CD4-positive, alpha-beta memory T cell (primary cell): ENCODE measurements at regions of chr17 and their contacts with region 1.

Region 1: GRCh38 chr17:28951991-28952975 is 965 bp upstream of the PHF12 start:
- DNase-seq: peak; percentile 94 to 99 (median 99)
- H3K4me3 ChIP-seq: peak overlapping the region; percentile 86 to 92
- H3K4me3 Mint-ChIP-seq: no peak overlapping the region
- H3K27ac ChIP-seq: peak overlapping the region; percentile 86
- H3K27ac Mint-ChIP-seq: no peak overlapping the region
- H3K4me1 ChIP-seq: peaks cover 29% of the 10 kb centered on the region
- H3K4me1 Mint-ChIP-seq: peaks cover 12 to 20% (median 18%) of the 10 kb centered on the region in 4 donors
- H3K27me3 ChIP-seq: no peaks in the 10 kb centered on the region
- H3K27me3 Mint-ChIP-seq: no peaks in the 10 kb centered on the region

Region 2: DNA sequence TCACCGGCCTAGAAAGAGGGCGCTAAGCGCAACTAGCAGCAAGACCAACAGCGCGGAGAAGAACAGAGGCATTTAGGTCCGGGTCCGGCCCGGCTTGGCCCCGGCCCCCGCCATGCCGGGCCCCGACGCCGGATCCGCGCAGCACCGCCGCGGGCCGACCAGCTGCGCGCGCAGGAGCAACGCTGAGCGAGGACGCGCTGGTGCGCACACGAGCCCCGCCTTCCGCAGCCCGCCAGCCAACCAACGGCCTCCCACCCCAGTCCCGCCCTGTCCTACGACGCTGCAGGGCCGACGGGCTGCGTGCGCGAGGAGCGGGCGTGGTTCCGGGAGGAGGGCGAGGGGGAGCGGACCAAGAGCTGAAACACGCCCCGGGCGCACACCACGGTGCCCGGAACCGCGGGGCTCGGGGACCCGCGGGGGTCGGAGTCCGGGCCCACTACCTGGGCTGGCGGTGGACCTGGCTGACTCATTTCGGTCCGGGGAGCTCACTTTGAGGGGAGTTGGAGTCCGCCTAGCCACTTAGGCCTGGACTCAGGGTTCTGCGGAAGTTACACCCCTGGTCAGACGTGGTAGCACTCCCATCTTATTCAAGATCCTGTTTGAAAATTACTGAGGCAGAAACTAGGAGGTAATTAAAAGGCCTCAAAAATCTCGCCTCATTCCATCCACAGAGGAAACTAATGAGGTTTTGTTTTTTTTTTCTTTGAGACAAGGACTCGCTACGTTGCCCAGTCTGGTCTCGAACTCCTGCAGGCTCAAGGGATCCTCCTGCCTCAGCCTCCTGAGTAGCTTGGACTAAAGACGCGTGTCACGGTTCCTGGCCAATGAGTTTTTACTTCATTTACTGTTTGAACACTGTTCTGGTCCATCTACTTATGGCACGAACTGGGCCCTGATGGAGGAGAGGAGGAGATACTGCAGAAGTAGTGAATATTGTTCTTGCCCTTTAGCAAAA is 307.0 kb before region 1 on chr17 and contains the start of gene BLTP2:
- CTCF ChIA-PET with region 1: interaction called, 3 read pairs
- POLR2A ChIA-PET with region 1: interaction called, 13 read pairs
- intact Hi-C with region 1: loop called (anchors 5 kb)
- DNase-seq: peak; percentile 93 to 95 (median 94)
- H3K4me3 ChIP-seq: peak within 1 kb of the TSS; percentile 45 to 98
- H3K4me3 Mint-ChIP-seq: peak within 1 kb of the TSS; percentile 86 to 96 (median 92)
- H3K27ac ChIP-seq: peak within 1 kb of the TSS; percentile 91
- H3K27ac Mint-ChIP-seq: peak within 1 kb of the TSS; percentile 93 to 99 (median 98)
- H3K4me1 ChIP-seq: peaks cover 47% of the 10 kb centered on the region
- H3K4me1 Mint-ChIP-seq: peaks cover 31 to 45% (median 37%) of the 10 kb centered on the region in 4 donors
- H3K27me3 ChIP-seq: no peaks in the 10 kb centered on the region
- H3K27me3 Mint-ChIP-seq: no peaks in the 10 kb centered on the region
- total RNA-seq, gene BLTP2: 132 to 149 TPM

Region 3: DNA sequence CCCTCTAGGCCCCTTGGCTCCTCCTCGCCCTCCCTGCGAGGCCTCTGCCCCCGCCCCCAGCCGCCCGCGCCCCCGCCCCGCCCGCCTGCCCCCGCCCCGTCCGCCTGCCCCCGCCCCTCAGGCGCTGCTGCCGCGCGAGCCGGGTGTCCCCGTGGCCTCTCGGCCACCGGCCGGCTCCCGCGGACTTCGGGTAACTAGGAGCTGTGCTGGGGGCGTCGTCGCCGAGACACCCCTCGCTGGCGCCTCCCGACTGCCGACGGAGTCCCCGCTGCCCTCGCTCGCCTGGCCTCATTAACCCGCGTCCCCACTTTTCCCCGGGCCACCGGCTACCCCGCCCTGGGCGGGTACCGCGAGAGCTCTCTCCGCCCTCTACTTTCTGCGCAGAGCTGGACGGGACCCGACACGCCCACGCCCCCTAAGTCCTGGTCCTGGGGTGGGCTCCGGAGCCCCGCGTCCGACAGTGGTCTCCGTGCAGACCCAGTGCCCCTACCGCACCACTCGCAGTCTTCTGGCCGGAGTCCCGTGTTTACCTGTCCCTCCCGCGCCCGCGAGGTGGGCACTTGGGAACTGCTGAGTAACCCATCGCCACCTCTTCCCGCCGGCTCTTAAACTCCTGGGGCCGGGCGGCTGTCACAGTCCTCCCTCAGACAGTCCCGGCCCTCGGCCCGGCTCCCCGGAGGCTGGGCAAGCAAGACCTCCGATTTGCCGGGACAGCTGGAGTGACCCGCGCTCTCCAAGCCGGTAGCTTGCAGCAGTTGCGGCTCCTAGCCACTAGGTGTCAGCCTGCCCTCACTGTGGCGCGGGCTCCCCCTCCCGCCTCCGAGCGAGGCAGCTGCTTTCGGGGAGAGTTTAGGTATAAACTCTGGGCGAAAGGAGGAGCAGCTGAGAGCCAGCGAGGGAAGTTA is 225.8 kb before region 1 on chr17 and contains the start of gene TLCD1:
- CTCF ChIA-PET with region 1: interaction called, 95 read pairs
- POLR2A ChIA-PET with region 1: interaction called, 135 read pairs
- intact Hi-C with region 1: loop called (anchors 1 kb)
- DNase-seq: peak; percentile 86 to 91 (median 88)
- H3K4me3 ChIP-seq: peak within 1 kb of the TSS; percentile 57 to 85
- H3K4me3 Mint-ChIP-seq: peak within 1 kb of the TSS; percentile 91 to 98 (median 96)
- H3K27ac ChIP-seq: peak within 1 kb of the TSS; percentile 98
- H3K27ac Mint-ChIP-seq: peak within 1 kb of the TSS; percentile 99 to 100 (median 100)
- H3K4me1 ChIP-seq: peaks cover 46% of the 10 kb centered on the region
- H3K4me1 Mint-ChIP-seq: peaks cover 36 to 70% (median 48%) of the 10 kb centered on the region in 4 donors
- H3K27me3 ChIP-seq: no peaks in the 10 kb centered on the region
- H3K27me3 Mint-ChIP-seq: no peaks in the 10 kb centered on the region
- total RNA-seq, gene TLCD1: 1.0 to 2.2 TPM

Region 4: DNA sequence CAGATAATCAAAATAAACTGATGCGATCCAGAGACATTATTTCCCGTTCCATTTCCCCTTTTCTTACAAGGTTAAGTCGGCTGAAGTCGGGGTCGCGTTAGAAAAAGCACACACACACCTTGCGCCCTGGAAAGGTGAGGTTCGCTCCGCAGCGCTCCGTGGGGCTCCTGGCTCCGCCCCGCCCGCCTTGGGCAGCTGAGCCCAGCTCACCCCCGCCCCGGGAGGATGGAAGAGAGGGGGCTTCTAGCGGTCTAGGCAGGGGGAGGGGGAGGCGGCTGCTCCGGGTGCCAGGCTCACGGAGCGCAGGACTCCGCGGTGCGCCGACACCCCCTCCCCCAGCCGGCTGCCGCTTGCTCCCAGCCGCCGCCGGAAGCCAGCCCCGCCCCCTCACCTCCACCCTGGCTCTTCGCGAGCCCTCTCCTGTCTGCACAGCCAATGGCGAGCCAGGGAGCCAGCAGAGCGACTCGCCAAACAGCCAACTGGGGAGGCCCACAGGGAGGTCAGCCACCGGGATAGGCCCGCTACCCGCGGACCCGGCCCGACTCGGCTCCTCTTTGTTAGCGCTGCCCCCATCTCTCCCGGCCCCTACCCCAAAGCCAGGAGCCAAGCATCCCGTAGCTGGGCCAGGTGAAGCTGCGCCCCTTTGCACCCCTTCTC is 140.1 kb before region 1 on chr17:
- CTCF ChIA-PET with region 1: no interaction called
- POLR2A ChIA-PET with region 1: interaction called, 5 read pairs
- intact Hi-C with region 1: loop called (anchors 1 kb)
- DNase-seq: peak; percentile 94 to 97 (median 95)
- H3K4me3 ChIP-seq: peak overlapping the region; percentile 75 to 84
- H3K4me3 Mint-ChIP-seq: peak overlapping the region; percentile 90 to 98 (median 93)
- H3K27ac ChIP-seq: peak overlapping the region; percentile 90
- H3K27ac Mint-ChIP-seq: peak overlapping the region; percentile 94 to 100 (median 98)
- H3K4me1 ChIP-seq: peaks cover 44% of the 10 kb centered on the region
- H3K4me1 Mint-ChIP-seq: peaks cover 19 to 47% (median 37%) of the 10 kb centered on the region in 4 donors
- H3K27me3 ChIP-seq: no peaks in the 10 kb centered on the region
- H3K27me3 Mint-ChIP-seq: no peaks in the 10 kb centered on the region

Region 5: GRCh38 chr17:28896884-28897768 is 55.2 kb before region 1 on chr17 and contains the start of gene FLOT2:
- CTCF ChIA-PET with region 1: interaction called, 31 read pairs
- POLR2A ChIA-PET with region 1: interaction called, 193 read pairs
- intact Hi-C with region 1: no loop called
- DNase-seq: peak; percentile 65 to 81 (median 74)
- H3K4me3 ChIP-seq: peak within 1 kb of the TSS; percentile 86 to 90
- H3K4me3 Mint-ChIP-seq: peak within 1 kb of the TSS; percentile 91 to 98 (median 96)
- H3K27ac ChIP-seq: peak within 1 kb of the TSS; percentile 88
- H3K27ac Mint-ChIP-seq: peak within 1 kb of the TSS; percentile 95 to 100 (median 96)
- H3K4me1 ChIP-seq: peaks cover 73% of the 10 kb centered on the region
- H3K4me1 Mint-ChIP-seq: peaks cover 47 to 83% (median 65%) of the 10 kb centered on the region in 4 donors
- H3K27me3 ChIP-seq: no peaks in the 10 kb centered on the region
- H3K27me3 Mint-ChIP-seq: no peaks in the 10 kb centered on the region
- total RNA-seq, gene FLOT2: 216 to 224 TPM

Region 6: DNA sequence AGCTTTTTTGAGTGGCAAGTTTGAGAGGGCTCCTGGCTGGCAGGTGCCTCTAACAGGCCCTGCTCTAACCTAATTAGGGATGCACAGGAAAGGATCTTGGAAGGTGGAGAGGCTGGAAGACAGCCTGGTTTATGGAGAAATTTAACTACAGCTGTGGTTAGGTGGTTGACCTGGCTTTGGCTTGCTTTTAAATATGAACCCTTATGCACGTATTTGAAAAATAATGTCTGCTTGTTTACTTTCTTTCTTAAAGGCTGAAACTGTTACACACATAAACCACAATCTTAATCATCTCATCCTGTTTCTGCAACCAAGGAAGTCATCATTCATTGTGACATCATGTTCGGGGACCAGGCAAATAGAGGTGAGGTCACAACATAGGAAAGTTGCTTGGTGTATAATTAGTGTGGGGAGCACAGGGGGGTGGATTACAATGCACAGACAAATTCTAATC is 26.3 kb before region 1 on chr17:
- CTCF ChIA-PET with region 1: interaction called, 35 read pairs
- POLR2A ChIA-PET with region 1: interaction called, 257 read pairs
- intact Hi-C with region 1: loop called (anchors 1 kb)
- DNase-seq: peak; percentile 87 to 92 (median 89)
- H3K4me3 ChIP-seq: peak overlapping the region in 1 of 2 donors; percentile 15
- H3K4me3 Mint-ChIP-seq: peak overlapping the region; percentile 49 to 80 (median 60)
- H3K27ac ChIP-seq: peak overlapping the region; percentile 77
- H3K27ac Mint-ChIP-seq: peak overlapping the region; percentile 90 to 98 (median 96)
- H3K4me1 ChIP-seq: peaks cover 56% of the 10 kb centered on the region
- H3K4me1 Mint-ChIP-seq: peaks cover 49 to 79% (median 59%) of the 10 kb centered on the region in 4 donors
- H3K27me3 ChIP-seq: no peaks in the 10 kb centered on the region
- H3K27me3 Mint-ChIP-seq: no peaks in the 10 kb centered on the region

Region 7: DNA sequence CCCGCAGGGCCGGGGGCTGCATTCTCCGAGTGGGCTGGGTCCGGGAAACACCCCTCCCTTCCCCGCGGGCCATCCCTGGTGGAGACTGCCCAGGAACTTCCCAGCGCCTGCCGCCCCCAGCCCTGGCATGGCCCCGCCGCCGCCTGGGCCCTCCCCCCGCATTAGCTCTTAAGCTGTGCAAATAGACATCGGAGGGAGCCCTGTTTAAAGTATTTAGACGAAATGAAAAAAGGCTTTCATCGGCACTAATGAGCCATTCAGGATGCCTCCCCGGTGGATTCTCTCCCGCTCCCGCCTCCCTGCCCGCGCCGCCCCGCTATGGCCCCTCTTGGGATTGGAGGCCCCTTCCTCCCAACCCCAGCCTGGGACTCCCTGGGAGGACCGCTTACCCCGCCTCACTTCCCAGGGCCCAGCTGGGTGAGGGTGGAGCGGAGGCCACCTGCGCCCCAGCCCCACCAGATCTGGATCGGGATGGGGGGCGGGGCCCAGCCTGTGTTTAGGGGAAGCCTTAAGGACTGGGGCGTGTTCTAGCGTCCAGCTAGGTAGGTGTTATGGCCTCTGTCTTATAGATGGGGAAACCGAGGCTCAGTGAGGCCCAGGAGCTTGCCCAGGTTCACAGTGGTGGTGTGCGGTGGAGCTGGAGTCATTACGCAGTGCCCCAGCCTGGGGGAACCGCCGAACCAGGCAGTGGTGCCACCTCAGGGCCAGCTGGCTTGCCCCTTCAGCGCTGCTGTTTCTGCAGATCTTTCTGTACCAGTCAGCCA is 33.8 kb after region 1 on chr17:
- CTCF ChIA-PET with region 1: no interaction called
- POLR2A ChIA-PET with region 1: no interaction called
- intact Hi-C with region 1: no loop called
- DNase-seq: no peak
- H3K4me3 ChIP-seq: no peak overlapping the region
- H3K4me3 Mint-ChIP-seq: no peak overlapping the region
- H3K27ac ChIP-seq: no peak overlapping the region
- H3K27ac Mint-ChIP-seq: no peak overlapping the region
- H3K4me1 ChIP-seq: peaks cover 26% of the 10 kb centered on the region
- H3K4me1 Mint-ChIP-seq: peaks cover 18 to 27% (median 20%) of the 10 kb centered on the region in 4 donors
- H3K27me3 ChIP-seq: no peaks in the 10 kb centered on the region
- H3K27me3 Mint-ChIP-seq: peaks cover 0 to 2% of the 10 kb centered on the region in 2 donors

Region 8: DNA sequence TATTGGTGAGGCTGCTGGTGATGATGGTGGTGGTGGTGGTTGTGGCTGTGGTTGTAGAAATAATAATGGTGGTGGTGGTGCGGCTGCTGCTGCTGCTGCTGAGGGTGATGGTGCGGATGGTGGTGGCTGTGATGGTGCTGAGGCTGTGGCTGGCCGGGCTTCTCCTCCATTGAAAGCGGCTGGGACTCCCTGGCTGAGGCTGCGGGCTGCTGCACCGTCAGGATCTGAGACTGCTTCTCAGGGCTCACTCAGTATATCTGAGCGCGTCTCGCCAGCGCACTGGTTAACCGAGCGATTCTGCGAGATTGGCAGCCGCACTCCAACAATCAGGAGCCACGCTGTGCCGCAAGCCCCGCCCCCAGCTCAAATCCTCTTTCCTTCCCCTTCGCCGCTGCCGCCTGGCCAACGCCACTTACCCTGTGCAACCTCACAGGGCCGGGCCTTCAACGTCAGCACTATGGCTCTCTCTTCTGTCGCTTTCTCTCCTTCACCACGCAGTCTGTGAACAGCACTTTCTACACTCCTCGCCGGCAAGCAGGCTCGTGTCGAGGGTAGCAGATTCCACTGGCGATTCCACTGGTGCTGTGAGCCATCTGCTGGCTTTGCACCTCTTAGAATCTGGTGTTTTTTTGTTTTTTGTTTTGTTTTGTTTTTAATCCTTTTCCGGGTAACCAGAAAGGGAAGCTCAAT is 341.8 kb after region 1 on chr17 and contains the start of gene NUFIP2:
- CTCF ChIA-PET with region 1: no interaction called
- POLR2A ChIA-PET with region 1: interaction called, 22 read pairs
- intact Hi-C with region 1: loop called (anchors 2 kb)
- DNase-seq: peak; percentile 95 to 99 (median 98)
- H3K4me3 ChIP-seq: peak within 1 kb of the TSS; percentile 77 to 79
- H3K4me3 Mint-ChIP-seq: peak within 1 kb of the TSS; percentile 99 to 100 (median 100)
- H3K27ac ChIP-seq: peak within 1 kb of the TSS; percentile 77
- H3K27ac Mint-ChIP-seq: peak within 1 kb of the TSS; percentile 98 to 100 (median 99)
- H3K4me1 ChIP-seq: peaks cover 41% of the 10 kb centered on the region
- H3K4me1 Mint-ChIP-seq: peaks cover 20 to 51% (median 34%) of the 10 kb centered on the region in 4 donors
- H3K27me3 ChIP-seq: no peaks in the 10 kb centered on the region
- H3K27me3 Mint-ChIP-seq: no peaks in the 10 kb centered on the region
- total RNA-seq, gene NUFIP2: 77.5 to 85.1 TPM